MCF 10A (cell line): ENCODE measurements at regions of chr1 and their contacts with region 1.

Region 1: GRCh38 chr1:206106328-206107167 is 10.6 kb downstream of the AVPR1B start:
- DNase-seq: peak; percentile 96
- H3K4me3 Mint-ChIP-seq: no peak overlapping the region
- H3K27ac Mint-ChIP-seq: no peak overlapping the region
- H3K4me1 Mint-ChIP-seq: peaks cover 9% of the 10 kb centered on the region
- H3K27me3 Mint-ChIP-seq: peaks cover 5% of the 10 kb centered on the region
- CTCF ChIP-seq: peak; percentile 99

Region 2: GRCh38 chr1:205396967-205397616 is 709.5 kb before region 1 on chr1:
- CTCF ChIA-PET with region 1: no interaction called
- POLR2A ChIA-PET with region 1: no interaction called
- intact Hi-C with region 1: no loop called
- DNase-seq: peak; percentile 87
- H3K4me3 Mint-ChIP-seq: no peak overlapping the region
- H3K27ac Mint-ChIP-seq: no peak overlapping the region
- H3K4me1 Mint-ChIP-seq: peaks cover 4% of the 10 kb centered on the region
- H3K27me3 Mint-ChIP-seq: peaks cover 27% of the 10 kb centered on the region
- CTCF ChIP-seq: peak; percentile 99

Region 3: DNA sequence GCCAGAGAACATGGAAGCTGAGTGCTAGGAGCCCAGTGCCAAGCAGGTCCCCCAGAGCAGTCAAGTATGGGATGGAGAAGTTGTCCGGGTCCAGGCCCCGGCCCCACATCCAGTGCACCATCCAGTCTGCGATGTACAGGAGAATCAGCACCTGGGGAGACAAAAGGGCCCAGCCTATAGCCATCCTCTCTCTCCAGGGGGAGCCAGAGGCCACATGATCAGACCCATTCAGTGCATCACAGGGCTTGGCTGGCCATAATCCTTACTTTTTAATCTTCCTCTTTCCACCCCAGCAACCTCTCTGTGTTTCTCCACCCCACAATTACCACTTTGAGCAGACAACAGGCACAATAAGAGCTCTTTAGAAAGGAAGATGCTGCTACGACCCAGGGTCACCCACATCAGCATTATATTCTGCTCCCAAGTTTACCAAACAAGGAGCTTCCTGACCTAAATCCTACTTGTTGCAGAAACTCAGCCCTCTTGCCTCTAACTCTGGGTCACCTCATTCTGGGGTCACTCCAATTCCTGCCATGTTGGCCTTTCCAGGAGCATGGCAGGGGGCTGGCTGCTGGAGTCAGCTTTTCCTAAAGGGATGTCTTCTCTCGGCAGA is 314.9 kb before region 1 on chr1:
- CTCF ChIA-PET with region 1: interaction called, 16 read pairs
- POLR2A ChIA-PET with region 1: interaction called, 5 read pairs
- intact Hi-C with region 1: loop called (anchors 1 kb)
- DNase-seq: peak; percentile 89
- H3K4me3 Mint-ChIP-seq: no peak overlapping the region
- H3K27ac Mint-ChIP-seq: no peak overlapping the region
- H3K4me1 Mint-ChIP-seq: no peaks in the 10 kb centered on the region
- H3K27me3 Mint-ChIP-seq: no peaks in the 10 kb centered on the region
- CTCF ChIP-seq: peak; percentile 99

Region 4: GRCh38 chr1:205983925-205984725 is 122.4 kb before region 1 on chr1:
- CTCF ChIA-PET with region 1: interaction called, 517 read pairs
- POLR2A ChIA-PET with region 1: interaction called, 31 read pairs
- intact Hi-C with region 1: loop called (anchors 1 kb)
- DNase-seq: peak; percentile 97
- H3K4me3 Mint-ChIP-seq: no peak overlapping the region
- H3K27ac Mint-ChIP-seq: peak overlapping the region; percentile 40
- H3K4me1 Mint-ChIP-seq: peaks cover 23% of the 10 kb centered on the region
- H3K27me3 Mint-ChIP-seq: no peaks in the 10 kb centered on the region
- CTCF ChIP-seq: peak; percentile 99

Region 5: GRCh38 chr1:206001476-206001888 is 105.1 kb before region 1 on chr1:
- CTCF ChIA-PET with region 1: interaction called, 56 read pairs
- POLR2A ChIA-PET with region 1: interaction called, 14 read pairs
- intact Hi-C with region 1: no loop called
- DNase-seq: peak; percentile 99
- H3K4me3 Mint-ChIP-seq: peak overlapping the region; percentile 69
- H3K27ac Mint-ChIP-seq: peak overlapping the region; percentile 75
- H3K4me1 Mint-ChIP-seq: peaks cover 37% of the 10 kb centered on the region
- H3K27me3 Mint-ChIP-seq: no peaks in the 10 kb centered on the region
- CTCF ChIP-seq: no peak

Region 6: DNA sequence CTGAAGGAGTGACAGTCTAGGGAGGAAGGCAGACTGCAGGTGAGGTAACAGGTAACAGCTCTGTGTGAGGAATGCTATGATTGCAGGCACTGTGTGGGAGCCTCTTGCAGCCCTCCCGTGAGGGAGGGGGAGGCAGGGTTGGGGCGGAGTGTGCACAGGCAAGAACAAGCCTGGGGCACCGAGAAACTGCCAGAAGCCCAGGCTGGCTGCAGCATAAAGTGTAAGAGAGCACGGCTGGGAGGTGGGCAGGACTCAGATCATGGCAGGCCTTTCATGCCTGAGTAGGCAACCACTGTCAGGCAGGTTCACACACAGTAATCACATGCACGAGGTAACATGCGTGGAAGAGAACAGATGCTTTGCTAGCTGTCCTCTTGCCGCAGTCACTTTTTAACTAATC is 64.9 kb before region 1 on chr1:
- CTCF ChIA-PET with region 1: interaction called, 14 read pairs
- POLR2A ChIA-PET with region 1: interaction called, 5 read pairs
- intact Hi-C with region 1: no loop called
- DNase-seq: peak; percentile 51
- H3K4me3 Mint-ChIP-seq: no peak overlapping the region
- H3K27ac Mint-ChIP-seq: no peak overlapping the region
- H3K4me1 Mint-ChIP-seq: peaks cover 7% of the 10 kb centered on the region
- H3K27me3 Mint-ChIP-seq: peaks cover 26% of the 10 kb centered on the region
- CTCF ChIP-seq: no peak

Region 7: GRCh38 chr1:206094024-206094423 is 12.5 kb before region 1 on chr1:
- CTCF ChIA-PET with region 1: interaction called, 136 read pairs
- POLR2A ChIA-PET with region 1: interaction called, 7 read pairs
- intact Hi-C with region 1: no loop called
- DNase-seq: no peak
- H3K4me3 Mint-ChIP-seq: no peak overlapping the region
- H3K27ac Mint-ChIP-seq: no peak overlapping the region
- H3K4me1 Mint-ChIP-seq: no peaks in the 10 kb centered on the region
- H3K27me3 Mint-ChIP-seq: peaks cover 9% of the 10 kb centered on the region
- CTCF ChIP-seq: no peak

Region 8: DNA sequence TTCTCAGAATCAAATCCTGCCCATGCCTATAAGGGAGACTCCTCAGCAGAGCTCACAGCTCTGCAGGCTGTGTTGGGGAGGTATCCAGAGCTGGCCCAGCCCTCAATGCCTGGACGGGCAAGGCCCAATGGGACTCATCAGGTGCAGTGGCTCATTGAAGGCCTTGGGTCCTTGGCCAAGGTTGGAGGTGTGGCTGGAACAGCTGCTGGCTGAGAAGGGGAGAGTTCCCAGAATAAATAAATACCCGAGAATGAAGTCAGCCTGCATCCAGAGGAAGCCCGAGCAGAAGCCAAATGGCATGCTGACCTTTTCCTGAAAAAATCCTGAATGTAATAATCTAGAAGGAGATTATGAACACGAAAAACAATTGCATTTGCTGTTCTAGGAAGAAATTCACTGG is 338.6 kb after region 1 on chr1:
- CTCF ChIA-PET with region 1: no interaction called
- POLR2A ChIA-PET with region 1: no interaction called
- intact Hi-C with region 1: no loop called
- DNase-seq: no peak
- H3K4me3 Mint-ChIP-seq: no peak overlapping the region
- H3K27ac Mint-ChIP-seq: peak overlapping the region; percentile 43
- H3K4me1 Mint-ChIP-seq: peaks cover 14% of the 10 kb centered on the region
- H3K27me3 Mint-ChIP-seq: no peaks in the 10 kb centered on the region
- CTCF ChIP-seq: no peak